ENCODE measurements at regions of chrX and their contacts with region 1.

Region 1: GRCh38 chrX:69538321-69538876 is 34.3 kb downstream of the NALF2 start:
- DNase-seq: peak; percentile 46
- H3K4me3 ChIP-seq: peak overlapping the region in 2 of 3 experiments; percentile 15 to 22
- H3K27ac ChIP-seq: no peak overlapping the region
- H3K4me1 ChIP-seq: no peaks in the 10 kb centered on the region
- H3K27me3 ChIP-seq: no peaks in the 10 kb centered on the region
- CTCF ChIP-seq: peak; percentile 67 to 81
- POLR2A ChIP-seq: no peak

Region 2: DNA sequence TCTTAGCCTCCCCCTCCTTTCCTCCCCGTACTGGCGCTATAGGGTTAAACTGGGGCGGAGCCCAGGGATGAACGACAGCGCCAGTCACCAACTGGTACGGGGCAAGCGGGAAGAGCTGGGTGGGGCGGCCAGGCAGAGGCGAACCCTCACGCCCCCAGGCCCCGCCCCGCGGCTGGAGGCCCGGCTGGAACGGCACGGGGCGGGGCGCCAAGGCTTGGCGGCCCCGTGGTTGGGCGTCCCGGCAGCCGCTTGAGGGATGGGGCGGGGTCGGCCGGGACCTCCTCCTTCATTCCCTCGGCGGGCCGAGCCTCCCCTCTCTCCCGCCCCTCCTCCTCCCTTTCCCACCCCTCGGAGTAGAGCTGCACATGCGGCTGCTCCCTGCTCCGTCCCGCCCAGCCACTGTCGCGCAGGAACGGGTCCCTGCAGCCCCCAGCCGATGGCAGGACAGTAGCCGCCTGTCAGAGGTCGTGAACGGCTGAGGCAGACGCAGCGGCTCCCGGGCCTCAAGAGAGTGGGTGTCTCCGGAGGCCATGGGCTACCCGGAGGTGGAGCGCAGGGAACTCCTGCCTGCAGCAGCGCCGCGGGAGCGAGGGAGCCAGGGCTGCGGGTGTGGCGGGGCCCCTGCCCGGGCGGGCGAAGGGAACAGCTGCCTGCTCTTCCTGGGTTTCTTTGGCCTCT is 77.5 kb after region 1 on chrX and contains the start of gene EDA:
- CTCF ChIA-PET with region 1: interaction called, 7 read pairs
- POLR2A ChIA-PET with region 1: no interaction called
- dilution Hi-C with region 1: no loop called
- intact Hi-C with region 1: loop called (anchors 1 kb)
- DNase-seq: peak; percentile 71
- H3K4me3 ChIP-seq: peak within 1 kb of the TSS in 2 of 3 experiments; percentile 32 to 47
- H3K27ac ChIP-seq: no peak within 1 kb of the TSS
- H3K4me1 ChIP-seq: no peaks in the 10 kb centered on the region
- H3K27me3 ChIP-seq: peaks cover 9 to 15% of the 10 kb centered on the region in 2 experiments
- CTCF ChIP-seq: no peak
- POLR2A ChIP-seq: no peak
- total RNA-seq, gene EDA: 0.44 and 1.2 TPM in 2 replicates